IMR-90 (cell line): ENCODE measurements at regions of chr1 and their contacts with region 1.

Region 1: GRCh38 chr1:186680245-186681061 is at the start of gene PTGS2:
- DNase-seq: peak; percentile 93
- ATAC-seq: peak; percentile 96
- H3K4me3 ChIP-seq: peak within 1 kb of the TSS; percentile 65
- H3K27ac ChIP-seq: peak within 1 kb of the TSS; percentile 72
- H3K4me1 ChIP-seq: no peaks in the 10 kb centered on the region
- H3K27me3 ChIP-seq: no peaks in the 10 kb centered on the region
- CTCF ChIP-seq: peak; percentile 60
- POLR2A ChIP-seq: peak; percentile 85
- RAD21 ChIP-seq: peak; percentile 35
- total RNA-seq, gene PTGS2: 4.8 and 6.9 TPM in 2 replicates

Region 2: DNA sequence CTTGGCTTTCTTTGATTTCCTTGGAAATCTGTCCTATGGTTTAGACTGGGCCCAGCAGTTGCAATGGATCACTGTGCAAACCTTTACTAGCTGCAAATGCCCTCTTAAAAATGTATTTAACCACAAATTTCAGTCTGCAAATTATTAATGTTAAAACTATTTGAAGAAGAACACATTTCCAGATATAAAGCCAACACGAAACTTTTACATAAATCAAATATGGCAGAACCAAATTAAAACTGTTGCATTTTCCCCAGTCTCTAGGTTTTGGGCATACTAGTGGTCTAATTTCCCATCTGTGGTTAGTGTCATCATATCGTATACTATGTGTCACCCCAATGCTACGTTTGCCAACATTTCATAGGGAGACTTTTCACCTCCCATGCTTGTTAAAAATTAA is 893.9 kb before region 1 on chr1:
- CTCF ChIA-PET with region 1: no interaction called
- POLR2A ChIA-PET with region 1: no interaction called
- dilution Hi-C with region 1: no loop called
- in situ Hi-C with region 1: no loop called
- intact Hi-C with region 1: no loop called
- DNase-seq: peak; percentile 38
- ATAC-seq: no peak; the same call in 1 of the 2 replicates
- H3K4me3 ChIP-seq: no peak overlapping the region
- H3K27ac ChIP-seq: no peak overlapping the region
- H3K4me1 ChIP-seq: peaks cover 2% of the 10 kb centered on the region; the same call in 1 of the 2 replicates
- H3K27me3 ChIP-seq: no peaks in the 10 kb centered on the region
- CTCF ChIP-seq: no peak
- POLR2A ChIP-seq: no peak
- RAD21 ChIP-seq: no peak

Region 3: GRCh38 chr1:186375088-186375953 is 305.1 kb before region 1 on chr1 and contains the starts of genes ODR4 and TPR:
- CTCF ChIA-PET with region 1: no interaction called
- POLR2A ChIA-PET with region 1: no interaction called
- dilution Hi-C with region 1: no loop called
- in situ Hi-C with region 1: no loop called
- intact Hi-C with region 1: loop called (anchors 1 kb)
- DNase-seq: peak; percentile 100
- ATAC-seq: peak; percentile 92
- H3K4me3 ChIP-seq: peak within 1 kb of the TSS; percentile 62
- H3K27ac ChIP-seq: peak within 1 kb of the TSS; percentile 92
- H3K4me1 ChIP-seq: peaks cover 2% of the 10 kb centered on the region; the same call in 1 of the 2 replicates
- H3K27me3 ChIP-seq: no peaks in the 10 kb centered on the region
- CTCF ChIP-seq: peak; percentile 92
- POLR2A ChIP-seq: peak; percentile 91
- RAD21 ChIP-seq: peak; percentile 38
- total RNA-seq, gene ODR4: 9.7 and 14.2 TPM in 2 replicates
- total RNA-seq, gene TPR: 60.4 and 63.6 TPM in 2 replicates

Region 4: DNA sequence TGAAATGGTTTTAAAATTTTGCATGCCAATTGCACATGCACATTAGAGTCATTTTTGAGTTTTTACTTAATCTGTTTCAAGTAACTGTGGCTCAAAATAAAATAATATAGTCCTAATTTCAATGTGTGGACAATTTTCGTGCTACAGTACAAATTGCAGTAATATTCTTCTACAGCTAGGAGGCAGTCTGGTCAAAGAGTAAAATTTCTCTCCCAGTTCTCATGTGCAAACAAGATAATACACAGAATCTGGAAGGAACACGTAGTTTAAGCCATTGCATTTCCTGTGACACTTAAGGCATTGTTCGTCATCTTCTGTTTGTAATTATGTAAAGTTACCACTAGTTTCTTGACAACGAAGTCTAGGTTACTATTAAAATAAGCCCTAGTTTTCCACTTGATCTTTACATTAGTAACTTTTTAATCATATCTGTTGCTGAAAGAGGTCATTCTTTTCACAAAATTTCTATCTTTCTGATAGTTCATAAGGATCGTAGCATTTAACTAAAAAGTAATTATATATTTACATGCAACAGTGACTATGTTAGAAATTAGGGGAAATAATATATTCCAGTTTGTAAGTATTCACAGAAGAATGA is 275.9 kb before region 1 on chr1:
- CTCF ChIA-PET with region 1: no interaction called
- POLR2A ChIA-PET with region 1: no interaction called
- dilution Hi-C with region 1: no loop called
- in situ Hi-C with region 1: no loop called
- intact Hi-C with region 1: loop called (anchors 1 kb)
- DNase-seq: peak; percentile 76
- ATAC-seq: peak; percentile 92
- H3K4me3 ChIP-seq: no peak overlapping the region
- H3K27ac ChIP-seq: no peak overlapping the region
- H3K4me1 ChIP-seq: no peaks in the 10 kb centered on the region; the same call in 1 of the 2 replicates
- H3K27me3 ChIP-seq: no peaks in the 10 kb centered on the region
- CTCF ChIP-seq: peak; percentile 80
- POLR2A ChIP-seq: no peak
- RAD21 ChIP-seq: peak; percentile 72

Region 5: GRCh38 chr1:186482661-186483255 is 197.7 kb before region 1 on chr1:
- CTCF ChIA-PET with region 1: interaction called, 3 read pairs
- POLR2A ChIA-PET with region 1: no interaction called
- dilution Hi-C with region 1: no loop called
- in situ Hi-C with region 1: loop called (anchors 5 kb)
- intact Hi-C with region 1: loop called (anchors 1 kb)
- DNase-seq: peak; percentile 75
- ATAC-seq: peak; percentile 94
- H3K4me3 ChIP-seq: no peak overlapping the region
- H3K27ac ChIP-seq: no peak overlapping the region
- H3K4me1 ChIP-seq: no peaks in the 10 kb centered on the region
- H3K27me3 ChIP-seq: no peaks in the 10 kb centered on the region
- CTCF ChIP-seq: peak; percentile 96
- POLR2A ChIP-seq: peak; percentile 51
- RAD21 ChIP-seq: peak; percentile 99

Region 6: GRCh38 chr1:186605762-186606350 is 74.6 kb before region 1 on chr1:
- CTCF ChIA-PET with region 1: interaction called, 5 read pairs
- POLR2A ChIA-PET with region 1: no interaction called
- dilution Hi-C with region 1: no loop called
- in situ Hi-C with region 1: no loop called
- intact Hi-C with region 1: loop called (anchors 5 kb)
- DNase-seq: peak; percentile 59
- ATAC-seq: peak; percentile 88
- H3K4me3 ChIP-seq: no peak overlapping the region
- H3K27ac ChIP-seq: no peak overlapping the region
- H3K4me1 ChIP-seq: no peaks in the 10 kb centered on the region
- H3K27me3 ChIP-seq: no peaks in the 10 kb centered on the region
- CTCF ChIP-seq: peak; percentile 68
- POLR2A ChIP-seq: no peak
- RAD21 ChIP-seq: peak; percentile 81

Region 7: DNA sequence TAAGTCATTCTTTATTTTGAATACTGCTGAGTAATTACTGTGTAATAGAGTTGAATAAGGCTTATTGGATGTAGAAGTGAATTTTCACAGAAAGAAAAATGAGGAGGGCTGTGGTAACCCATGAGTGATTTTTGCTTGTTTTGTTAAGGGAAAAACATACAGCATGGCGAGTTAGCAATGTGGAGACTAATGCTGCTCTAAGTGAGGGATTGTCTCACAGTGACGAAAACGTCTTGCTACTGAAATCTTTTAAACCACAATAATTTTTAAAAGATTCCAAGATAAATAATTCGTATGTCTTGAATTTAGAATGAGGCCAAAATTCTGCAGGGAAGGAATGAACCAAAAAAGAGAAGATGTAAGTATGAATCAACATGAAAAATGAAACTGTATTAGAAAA is 132.1 kb after region 1 on chr1:
- CTCF ChIA-PET with region 1: no interaction called
- POLR2A ChIA-PET with region 1: no interaction called
- dilution Hi-C with region 1: no loop called
- in situ Hi-C with region 1: no loop called
- intact Hi-C with region 1: no loop called
- DNase-seq: peak; percentile 96
- ATAC-seq: peak; percentile 98
- H3K4me3 ChIP-seq: no peak overlapping the region
- H3K27ac ChIP-seq: no peak overlapping the region
- H3K4me1 ChIP-seq: no peaks in the 10 kb centered on the region
- H3K27me3 ChIP-seq: no peaks in the 10 kb centered on the region; the same call in 1 of the 2 replicates
- CTCF ChIP-seq: no peak
- POLR2A ChIP-seq: no peak
- RAD21 ChIP-seq: no peak

Region 8: DNA sequence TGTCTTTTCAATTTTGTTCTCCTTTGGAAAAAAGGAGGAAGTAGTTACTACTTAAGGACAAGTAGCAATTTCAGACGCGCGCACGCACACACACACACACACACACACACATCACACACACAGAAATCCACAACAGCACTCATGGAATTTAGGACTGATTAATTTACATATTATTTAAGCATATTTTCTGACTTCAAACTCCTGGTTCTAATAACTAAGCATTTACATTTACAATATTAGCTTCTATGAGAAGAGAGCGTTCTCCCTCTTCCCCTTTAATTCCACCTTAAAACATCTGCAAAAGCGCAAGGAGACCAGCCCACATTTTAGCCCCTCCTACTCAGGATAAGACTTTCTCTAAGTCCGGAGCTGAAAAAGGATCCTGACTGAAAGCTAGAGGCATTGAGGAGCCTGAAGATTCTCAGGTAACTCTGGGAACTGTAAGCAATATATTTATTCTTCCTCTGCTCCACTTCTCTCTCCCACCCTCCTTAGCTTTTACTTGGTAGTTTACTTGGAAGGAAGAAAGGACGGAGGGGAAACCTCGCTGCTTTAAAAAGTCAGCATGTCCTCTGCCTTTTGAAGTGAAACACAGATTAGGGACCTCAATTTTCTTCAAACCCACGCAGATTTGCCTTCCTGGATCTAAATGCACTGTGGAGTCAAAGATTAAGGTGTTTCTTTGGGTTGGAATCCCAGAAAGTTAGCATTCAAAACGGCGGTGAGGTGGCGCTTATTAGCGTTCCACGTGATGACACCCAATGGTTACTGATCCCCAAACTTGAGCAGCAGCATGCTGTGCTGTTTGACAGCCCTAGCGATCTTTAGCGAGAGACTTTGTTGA is 148.4 kb after region 1 on chr1 and contains the start of gene PLA2G4A:
- CTCF ChIA-PET with region 1: no interaction called
- POLR2A ChIA-PET with region 1: no interaction called
- dilution Hi-C with region 1: no loop called
- in situ Hi-C with region 1: no loop called
- intact Hi-C with region 1: loop called (anchors 2 kb)
- DNase-seq: peak; percentile 73
- ATAC-seq: peak; percentile 98
- H3K4me3 ChIP-seq: peak within 1 kb of the TSS; percentile 67
- H3K27ac ChIP-seq: no peak within 1 kb of the TSS
- H3K4me1 ChIP-seq: no peaks in the 10 kb centered on the region
- H3K27me3 ChIP-seq: no peaks in the 10 kb centered on the region
- CTCF ChIP-seq: no peak
- POLR2A ChIP-seq: no peak
- RAD21 ChIP-seq: no peak
- total RNA-seq, gene PLA2G4A: 3.8 and 4.4 TPM in 2 replicates

Region 9: GRCh38 chr1:187840557-187840956 is 1160.1 kb after region 1 on chr1:
- CTCF ChIA-PET with region 1: no interaction called
- POLR2A ChIA-PET with region 1: no interaction called
- dilution Hi-C with region 1: no loop called
- in situ Hi-C with region 1: no loop called
- intact Hi-C with region 1: no loop called
- DNase-seq: peak; percentile 4
- ATAC-seq: peak; percentile 32; the same call in 1 of the 2 replicates
- H3K4me3 ChIP-seq: no peak overlapping the region
- H3K27ac ChIP-seq: no peak overlapping the region
- H3K4me1 ChIP-seq: no peaks in the 10 kb centered on the region
- H3K27me3 ChIP-seq: no peaks in the 10 kb centered on the region
- CTCF ChIP-seq: no peak
- POLR2A ChIP-seq: no peak
- RAD21 ChIP-seq: no peak